ENCODE measurements at regions of chr1 and their contacts with region 1.

Region 1: GRCh38 chr1:180527101-180527669 is 24.8 kb upstream of the ACBD6 start:
- DNase-seq: no peak
- ATAC-seq: peak in 1 of 2 donors; percentile 27
- H3K4me3 ChIP-seq: no peak overlapping the region
- H3K27ac ChIP-seq: no peak overlapping the region
- H3K4me1 ChIP-seq: peaks cover under 1% of the 10 kb centered on the region
- H3K27me3 ChIP-seq: no peaks in the 10 kb centered on the region

Region 2: DNA sequence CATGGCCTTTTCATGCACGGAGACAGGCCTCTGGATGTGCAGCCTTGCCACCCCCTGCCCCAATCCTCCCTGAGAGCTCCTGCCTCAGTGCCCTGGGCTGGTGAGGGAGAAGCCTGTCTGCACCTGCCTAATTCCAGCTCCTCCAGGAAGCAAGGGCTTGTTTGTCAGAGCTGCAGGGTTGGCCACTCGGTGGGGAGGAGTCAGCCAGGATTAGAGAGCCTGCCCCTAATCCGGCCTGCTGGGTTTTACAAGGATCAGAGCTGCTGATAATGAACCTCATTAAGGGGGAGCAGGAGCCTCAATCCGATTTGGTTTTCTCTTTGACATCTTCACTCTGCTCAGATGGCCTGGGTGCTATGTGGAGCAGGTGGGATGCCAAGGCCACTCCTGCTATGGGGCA is 329.0 kb before region 1 on chr1:
- intact Hi-C with region 1: no loop called
- DNase-seq: no peak
- ATAC-seq: no peak
- H3K4me3 ChIP-seq: no peak overlapping the region
- H3K27ac ChIP-seq: no peak overlapping the region
- H3K4me1 ChIP-seq: no peaks in the 10 kb centered on the region
- H3K27me3 ChIP-seq: no peaks in the 10 kb centered on the region

Region 3: DNA sequence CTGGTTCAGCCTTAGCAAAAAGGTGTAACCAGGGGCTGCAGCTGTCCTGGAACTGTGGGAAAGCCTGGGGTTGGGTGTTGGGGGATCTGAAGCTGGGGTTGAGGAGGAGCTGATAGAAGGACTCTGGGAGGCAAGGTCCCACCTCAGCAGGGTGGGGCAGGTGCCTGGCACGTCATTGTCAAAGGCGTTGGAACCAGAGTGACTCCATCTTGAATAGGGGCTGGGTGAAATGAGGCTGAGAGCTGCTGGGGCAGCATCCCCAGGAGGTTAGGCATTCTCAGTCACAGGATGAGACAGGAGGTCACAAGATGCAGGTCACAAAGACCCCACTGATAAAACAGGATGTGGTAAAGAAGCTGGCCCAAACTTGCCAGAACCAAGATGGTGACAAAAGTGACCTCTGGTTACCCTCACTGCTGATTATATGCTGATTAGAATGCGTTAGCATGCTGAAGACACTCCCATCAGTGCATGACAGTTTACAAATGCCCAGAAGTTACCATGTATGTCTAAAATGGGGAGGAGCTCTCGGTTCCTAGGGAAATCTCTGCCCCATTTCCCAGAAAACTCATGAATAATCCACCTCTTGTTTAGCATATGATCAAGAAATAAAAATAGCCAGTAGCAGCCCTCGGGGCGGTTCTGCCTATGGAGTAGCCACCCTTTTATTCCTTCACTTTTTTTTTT is 646.7 kb after region 1 on chr1:
- intact Hi-C with region 1: loop called in 1 of 4 experiments (anchors 5 kb)
- DNase-seq: no peak
- ATAC-seq: no peak
- H3K4me3 ChIP-seq: no peak overlapping the region
- H3K27ac ChIP-seq: no peak overlapping the region
- H3K4me1 ChIP-seq: no peaks in the 10 kb centered on the region
- H3K27me3 ChIP-seq: no peaks in the 10 kb centered on the region

Region 4: GRCh38 chr1:181206513-181206912 is 679.3 kb after region 1 on chr1:
- intact Hi-C with region 1: no loop called
- DNase-seq: peak in 1 of 3 donors; percentile 57
- ATAC-seq: peak; percentile 57 to 62
- H3K4me3 ChIP-seq: no peak overlapping the region
- H3K27ac ChIP-seq: no peak overlapping the region
- H3K4me1 ChIP-seq: peaks cover 2% of the 10 kb centered on the region
- H3K27me3 ChIP-seq: no peaks in the 10 kb centered on the region

Measured in right cardiac atrium (tissue), 5 donors.